Dendritic cell treated with granulocyte-macrophage colony-stimulating factor and Interleukin-4, amounts not matched to agents 40 ng/mL and 50 ng/mL, for 4 days (primary cell): ENCODE measurements at regions of chr10 and their contacts with region 1.

Region 1: DNA sequence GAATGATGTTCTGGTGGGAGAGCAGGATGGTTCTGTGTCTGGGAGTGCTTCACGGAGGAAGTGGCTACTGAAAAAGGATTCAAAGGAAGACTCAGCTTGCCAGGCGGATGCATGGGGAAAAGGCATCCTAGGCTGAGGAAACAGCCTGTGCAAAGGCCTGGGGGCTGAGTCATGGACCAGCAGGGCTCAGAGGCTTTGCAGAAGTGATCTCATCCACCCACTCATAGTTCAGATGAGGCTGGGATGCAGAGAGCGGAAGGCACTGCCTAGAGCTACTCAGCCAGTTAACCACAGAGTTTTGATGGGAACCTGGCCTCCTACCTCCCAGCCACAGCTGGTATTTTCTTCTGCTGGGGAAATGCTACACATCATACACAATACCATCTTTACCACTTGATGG is 15.8 kb upstream of the ADAMTS14 start:
- H3K4me3 Mint-ChIP-seq: no peak overlapping the region
- H3K27ac Mint-ChIP-seq: peak overlapping the region; percentile 45
- H3K4me1 Mint-ChIP-seq: peaks cover 43% of the 10 kb centered on the region
- H3K27me3 Mint-ChIP-seq: peaks cover 9% of the 10 kb centered on the region

Region 2: DNA sequence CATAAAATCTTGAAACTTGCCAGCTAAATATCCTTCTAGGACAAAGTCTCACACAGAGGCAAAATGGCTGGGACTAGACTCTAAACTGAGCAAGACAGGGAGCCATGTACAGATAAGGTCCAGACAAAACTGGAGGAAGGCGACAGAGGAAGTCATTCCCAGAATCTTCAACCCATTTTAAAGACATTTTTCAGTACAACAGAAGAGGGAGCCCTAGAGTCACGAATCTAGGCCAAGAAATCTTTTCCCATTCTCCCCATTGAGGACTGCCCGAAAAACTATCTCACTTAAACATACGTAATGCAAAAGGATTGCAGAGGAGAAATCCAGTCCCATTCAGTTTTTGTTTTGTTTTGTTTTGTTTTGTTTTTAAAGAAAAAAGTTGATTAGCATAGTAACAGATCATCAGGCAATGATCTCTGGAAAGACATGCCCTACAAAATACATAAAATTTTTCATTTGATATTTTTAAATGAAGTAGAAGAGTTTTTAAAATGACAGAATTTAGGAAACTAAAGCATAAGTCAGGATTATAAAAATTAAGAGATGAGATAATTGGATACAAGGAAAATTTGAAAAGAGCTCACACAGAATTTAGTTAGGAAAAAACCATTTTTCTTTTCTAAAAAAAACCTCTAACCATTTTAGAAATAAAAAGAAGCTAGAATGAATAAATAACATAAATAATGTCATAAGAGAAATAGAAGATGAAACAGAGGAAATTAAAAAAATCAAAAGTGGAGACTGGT is 37.0 kb before region 1 on chr10:
- intact Hi-C with region 1: loop called (anchors 1 kb)
- H3K4me3 Mint-ChIP-seq: no peak overlapping the region
- H3K27ac Mint-ChIP-seq: no peak overlapping the region
- H3K4me1 Mint-ChIP-seq: peaks cover 20% of the 10 kb centered on the region
- H3K27me3 Mint-ChIP-seq: peaks cover 24% of the 10 kb centered on the region

Region 3: DNA sequence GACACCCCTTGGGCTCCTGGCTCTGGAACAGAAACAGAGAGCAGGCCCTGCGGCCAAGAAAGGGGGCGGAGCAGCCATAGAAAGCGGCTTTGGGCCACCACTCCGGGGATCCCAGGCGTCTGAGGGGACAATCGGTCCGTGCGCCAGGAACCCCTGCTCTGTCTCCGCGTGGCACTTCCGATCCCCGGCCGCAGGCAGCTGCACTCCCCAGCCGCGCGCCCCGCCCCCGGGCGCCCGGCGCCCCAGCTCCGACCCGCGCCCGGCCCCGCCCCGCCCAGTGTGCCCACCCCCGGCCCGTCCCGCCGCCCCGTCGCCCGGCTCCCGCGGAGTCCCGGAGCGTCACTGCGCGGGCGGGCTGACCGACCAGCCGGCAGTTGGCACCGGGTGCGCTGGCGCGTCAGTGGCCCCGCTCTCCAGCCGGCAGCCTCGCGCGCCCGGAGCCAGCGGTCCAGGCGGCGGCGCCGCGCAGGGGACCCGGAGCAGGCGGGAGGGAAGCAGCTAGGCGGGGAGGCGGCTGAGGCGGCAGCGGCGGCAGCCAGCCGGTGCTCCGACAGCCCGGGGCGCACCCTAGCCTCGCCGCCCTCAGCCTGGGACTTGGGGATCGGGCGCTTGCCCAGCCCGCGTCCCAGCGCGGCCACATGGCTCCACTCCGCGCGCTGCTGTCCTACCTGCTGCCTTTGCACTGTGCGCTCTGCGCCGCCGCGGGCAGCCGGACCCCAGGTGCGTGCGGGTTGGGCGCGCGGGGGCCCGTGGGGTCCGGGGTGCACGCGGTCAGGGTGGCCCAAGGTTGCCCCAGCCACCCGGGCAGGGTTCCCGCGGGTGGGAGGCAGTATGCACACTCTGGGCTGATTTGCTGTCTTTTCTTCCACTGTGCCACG is 15.9 kb after region 1 on chr10 and contains the start of gene ADAMTS14:
- intact Hi-C with region 1: loop called (anchors 2 kb)
- H3K4me3 Mint-ChIP-seq: peak within 1 kb of the TSS; percentile 63
- H3K27ac Mint-ChIP-seq: peak within 1 kb of the TSS; percentile 10
- H3K4me1 Mint-ChIP-seq: peaks cover 67% of the 10 kb centered on the region
- H3K27me3 Mint-ChIP-seq: peaks cover 69% of the 10 kb centered on the region